HEK293 (cell line): ENCODE measurements at regions of chr1 and their contacts with region 1.

Region 1: GRCh38 chr1:30801771-30802198 is 44.2 kb upstream of the LAPTM5 start:
- H3K4me3 ChIP-seq: no peak overlapping the region
- H3K27ac ChIP-seq: no peak overlapping the region
- H3K4me1 ChIP-seq: no peaks in the 10 kb centered on the region
- CTCF ChIP-seq: peak; percentile 88

Region 2: DNA sequence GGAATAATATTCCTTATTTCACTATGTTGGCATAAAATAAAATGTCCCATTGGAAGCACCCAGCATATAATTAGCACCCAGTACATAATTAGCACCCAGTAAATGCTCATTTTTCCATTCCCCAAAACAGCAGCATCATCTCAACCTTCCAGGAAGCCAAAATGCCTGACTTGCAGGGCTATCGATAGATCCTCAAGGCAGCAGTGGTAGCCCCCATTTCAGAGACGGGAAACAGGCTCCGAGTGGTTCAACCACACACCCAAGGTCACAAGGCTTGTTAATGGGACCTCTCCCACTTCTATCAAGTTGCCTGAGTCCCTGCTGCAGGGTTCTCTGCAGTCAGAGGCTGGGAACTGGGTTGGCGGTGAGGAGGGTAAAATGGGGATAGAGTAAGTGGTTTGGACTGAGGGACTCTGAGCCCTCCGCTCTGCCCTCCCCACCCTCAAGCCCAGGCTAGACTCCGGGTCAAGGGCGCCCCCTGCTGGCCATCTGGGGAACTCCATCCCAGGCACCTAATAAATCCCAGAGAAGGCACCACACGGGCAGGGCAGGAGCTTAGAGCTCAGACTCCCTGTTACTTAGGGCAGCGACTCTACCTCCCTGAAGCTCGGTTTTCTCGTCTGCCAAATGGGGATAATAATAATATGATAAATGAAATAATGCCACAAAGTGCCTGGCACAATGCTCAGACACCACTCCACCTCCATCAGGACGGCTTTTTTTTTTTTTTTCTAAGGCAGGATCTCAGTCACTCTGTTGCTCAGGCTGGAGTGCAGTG is 22.3 kb before region 1 on chr1:
- CTCF ChIA-PET with region 1: interaction called, 91 read pairs
- POLR2A ChIA-PET with region 1: no interaction called
- H3K4me3 ChIP-seq: no peak overlapping the region
- H3K27ac ChIP-seq: no peak overlapping the region
- H3K4me1 ChIP-seq: no peaks in the 10 kb centered on the region
- CTCF ChIP-seq: peak; percentile 88

Region 3: GRCh38 chr1:30816211-30817076 is 14.7 kb after region 1 on chr1:
- CTCF ChIA-PET with region 1: interaction called, 32 read pairs
- POLR2A ChIA-PET with region 1: no interaction called
- H3K4me3 ChIP-seq: no peak overlapping the region
- H3K27ac ChIP-seq: no peak overlapping the region
- H3K4me1 ChIP-seq: 0 out of 2 replicates have a peak, but pooled peaks cover 4% of the 10 kb centered on the region
- CTCF ChIP-seq: no peak

Region 4: DNA sequence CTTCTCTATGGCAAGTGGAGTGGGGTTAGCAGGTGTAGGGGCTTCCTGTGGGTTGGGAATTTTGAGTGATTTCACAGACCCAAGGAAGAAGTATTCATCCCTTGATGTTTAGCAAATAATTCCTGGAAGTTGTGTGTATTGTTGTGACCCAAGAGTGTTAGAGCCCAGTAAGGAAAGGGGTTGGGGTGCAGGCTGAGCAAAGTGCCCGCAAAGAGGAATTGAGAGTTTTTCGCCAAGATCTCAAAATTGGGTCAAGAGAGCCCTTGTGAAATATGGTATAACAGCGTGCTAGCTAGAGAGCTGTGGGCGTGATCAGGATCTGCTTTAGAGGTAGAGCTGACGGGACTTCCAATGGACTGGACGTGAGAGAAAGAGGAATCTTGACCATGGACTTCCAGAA is 28.8 kb after region 1 on chr1:
- CTCF ChIA-PET with region 1: interaction called, 27 read pairs
- POLR2A ChIA-PET with region 1: interaction called, 3 read pairs
- H3K4me3 ChIP-seq: no peak overlapping the region
- H3K27ac ChIP-seq: no peak overlapping the region
- H3K4me1 ChIP-seq: peaks cover 6% of the 10 kb centered on the region; the same call in 1 of the 2 replicates
- CTCF ChIP-seq: no peak

Region 5: GRCh38 chr1:30853350-30853749 is 51.6 kb after region 1 on chr1:
- CTCF ChIA-PET with region 1: interaction called, 18 read pairs
- POLR2A ChIA-PET with region 1: no interaction called
- H3K4me3 ChIP-seq: no peak overlapping the region
- H3K27ac ChIP-seq: no peak overlapping the region
- H3K4me1 ChIP-seq: peaks cover 5% of the 10 kb centered on the region; the same call in 1 of the 2 replicates
- CTCF ChIP-seq: no peak

Region 6: DNA sequence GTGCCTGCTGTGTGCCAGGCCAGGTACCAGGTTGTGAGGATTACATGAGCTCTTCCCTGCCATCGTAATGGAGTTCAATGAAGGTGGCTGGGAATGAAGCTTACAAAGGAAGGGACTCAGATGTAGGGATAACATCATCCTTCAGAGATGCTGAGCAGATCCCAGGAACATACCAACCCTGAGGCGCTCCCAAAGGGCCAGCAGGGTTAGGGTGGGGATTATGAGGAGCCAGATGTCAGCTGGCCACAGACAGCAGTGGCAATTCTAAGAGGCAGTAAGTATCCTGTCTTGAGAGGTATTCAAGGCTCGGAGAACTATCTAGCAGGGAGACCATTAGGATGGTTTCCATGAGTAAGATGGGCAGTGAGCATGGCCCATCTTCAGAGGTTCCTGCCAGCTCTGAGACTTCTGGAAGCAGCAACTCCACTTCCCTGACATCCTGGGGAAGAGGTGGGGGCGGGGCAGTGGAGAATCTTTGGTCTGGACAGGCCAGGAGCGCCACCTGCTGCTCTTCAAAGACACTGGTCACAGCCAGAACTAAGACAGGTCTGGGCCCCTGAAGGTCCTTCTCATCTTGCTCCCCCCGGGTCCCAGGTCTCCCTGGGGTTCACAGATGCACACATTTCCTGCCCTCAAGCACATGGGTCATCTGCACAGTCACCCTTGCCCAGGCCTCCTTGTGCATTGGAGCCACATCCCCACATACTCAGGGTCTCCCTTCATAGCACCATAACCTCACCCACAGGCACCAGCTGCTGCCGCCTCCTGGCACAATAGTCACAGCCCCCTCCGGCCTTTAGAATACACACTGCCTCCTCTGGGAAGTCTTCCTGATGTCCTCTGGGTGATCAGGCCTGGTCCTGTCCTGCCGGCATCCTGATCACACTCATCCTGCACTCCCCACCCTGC is 109.5 kb after region 1 on chr1:
- CTCF ChIA-PET with region 1: interaction called, 434 read pairs
- POLR2A ChIA-PET with region 1: interaction called, 6 read pairs
- H3K4me3 ChIP-seq: no peak overlapping the region
- H3K27ac ChIP-seq: no peak overlapping the region
- H3K4me1 ChIP-seq: peaks cover 8% of the 10 kb centered on the region; the same call in 1 of the 2 replicates
- CTCF ChIP-seq: peak; percentile 93

Region 7: GRCh38 chr1:30929135-30929889 is 127.5 kb after region 1 on chr1:
- CTCF ChIA-PET with region 1: interaction called, 66 read pairs
- POLR2A ChIA-PET with region 1: interaction called, 3 read pairs
- H3K4me3 ChIP-seq: no peak overlapping the region
- H3K27ac ChIP-seq: no peak overlapping the region
- H3K4me1 ChIP-seq: no peaks in the 10 kb centered on the region
- CTCF ChIP-seq: peak; percentile 79; the same call in 1 of the 2 replicates

Region 8: DNA sequence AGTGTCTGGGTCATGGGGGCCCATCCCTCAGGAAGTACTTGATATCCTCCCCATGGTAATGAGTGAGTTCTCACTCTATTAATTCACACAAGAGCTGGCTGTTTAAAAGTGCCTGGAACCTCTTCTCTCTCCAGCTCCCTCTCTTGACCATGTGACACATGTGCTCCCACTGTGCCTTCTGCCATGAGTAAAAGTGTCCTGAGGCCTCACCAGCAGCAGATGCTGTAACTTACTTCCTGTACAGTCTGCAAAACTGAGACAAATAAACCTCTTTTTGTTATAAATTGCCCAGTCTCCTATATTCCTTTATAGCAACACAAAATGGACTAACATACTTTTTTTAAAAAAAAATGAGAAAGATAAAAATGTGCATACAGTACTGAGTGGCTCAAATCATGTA is 239.7 kb after region 1 on chr1:
- CTCF ChIA-PET with region 1: no interaction called
- POLR2A ChIA-PET with region 1: no interaction called
- H3K4me3 ChIP-seq: no peak overlapping the region
- H3K27ac ChIP-seq: no peak overlapping the region
- H3K4me1 ChIP-seq: peaks cover 8% of the 10 kb centered on the region
- CTCF ChIP-seq: no peak